Transverse colon (tissue), 4 donors: ENCODE measurements at regions of chr22 and their contacts with region 1.

Region 1: DNA sequence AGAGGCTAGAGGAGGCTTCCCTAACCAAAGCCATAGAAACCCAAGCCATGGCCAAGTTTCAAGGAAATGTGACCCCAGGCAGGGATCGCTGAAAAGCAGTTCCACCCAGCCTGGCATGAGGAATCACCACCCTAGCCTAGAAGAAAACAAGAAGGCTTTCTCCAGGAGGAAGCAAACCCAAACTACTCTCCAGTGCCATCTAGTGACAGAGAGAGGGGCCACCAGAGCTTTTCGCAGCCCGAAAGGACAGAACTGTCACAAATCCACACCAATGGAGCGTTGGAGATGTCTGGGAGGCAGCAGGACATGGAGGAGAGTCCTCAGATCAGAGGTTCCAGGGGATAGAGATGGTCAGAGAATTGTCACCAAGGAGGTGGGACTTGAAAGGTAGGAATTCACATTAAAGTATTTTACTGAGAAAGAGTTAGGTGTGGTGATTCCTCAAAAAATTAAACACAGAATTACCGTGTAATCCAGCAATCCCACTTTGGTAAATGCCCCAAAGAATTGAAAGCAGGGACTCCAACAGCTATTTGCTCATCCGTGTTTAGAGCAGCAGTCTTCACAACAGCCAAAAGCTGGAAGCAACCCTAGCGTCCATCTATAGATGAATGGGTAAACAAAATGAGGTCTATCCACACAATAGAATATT is 67.3 kb upstream of the NUP50 start:
- DNase-seq: peak; percentile 61
- H3K4me3 ChIP-seq: no peak overlapping the region
- H3K27ac ChIP-seq: no peak overlapping the region
- H3K4me1 ChIP-seq: peaks cover 0 to 2% (median 1%) of the 10 kb centered on the region in 4 donors
- H3K27me3 ChIP-seq: peaks cover 42% of the 10 kb centered on the region
- CTCF ChIP-seq: peak; percentile 56 to 73 (median 67)
- EP300 ChIP-seq: no peak
- POLR2A ChIP-seq: no peak

Region 2: GRCh38 chr22:43263645-43264514 is 1832.5 kb before region 1 on chr22:
- in situ Hi-C with region 1: no loop called
- intact Hi-C with region 1: loop called (anchors 5 kb)
- DNase-seq: peak; percentile 69
- H3K4me3 ChIP-seq: no peak overlapping the region
- H3K27ac ChIP-seq: peak overlapping the region; percentile 31 to 51 (median 42)
- H3K4me1 ChIP-seq: peaks cover 4 to 20% (median 10%) of the 10 kb centered on the region in 4 donors
- H3K27me3 ChIP-seq: peaks cover 31% of the 10 kb centered on the region
- CTCF ChIP-seq: no peak
- EP300 ChIP-seq: no peak
- POLR2A ChIP-seq: no peak

Region 3: GRCh38 chr22:44807915-44808690 is 288.3 kb before region 1 on chr22:
- in situ Hi-C with region 1: loop called in 1 of 4 experiments (anchors 25 kb)
- intact Hi-C with region 1: no loop called
- DNase-seq: no peak
- H3K4me3 ChIP-seq: no peak overlapping the region
- H3K27ac ChIP-seq: no peak overlapping the region
- H3K4me1 ChIP-seq: no peaks in the 10 kb centered on the region
- H3K27me3 ChIP-seq: no peaks in the 10 kb centered on the region
- CTCF ChIP-seq: no peak
- EP300 ChIP-seq: no peak
- POLR2A ChIP-seq: no peak

Region 4: GRCh38 chr22:45045208-45045607 is 51.2 kb before region 1 on chr22:
- in situ Hi-C with region 1: no loop called
- intact Hi-C with region 1: no loop called
- DNase-seq: no peak
- H3K4me3 ChIP-seq: no peak overlapping the region
- H3K27ac ChIP-seq: no peak overlapping the region
- H3K4me1 ChIP-seq: no peaks in the 10 kb centered on the region
- H3K27me3 ChIP-seq: peaks cover 14% of the 10 kb centered on the region
- CTCF ChIP-seq: no peak
- EP300 ChIP-seq: no peak
- POLR2A ChIP-seq: no peak

Region 5: DNA sequence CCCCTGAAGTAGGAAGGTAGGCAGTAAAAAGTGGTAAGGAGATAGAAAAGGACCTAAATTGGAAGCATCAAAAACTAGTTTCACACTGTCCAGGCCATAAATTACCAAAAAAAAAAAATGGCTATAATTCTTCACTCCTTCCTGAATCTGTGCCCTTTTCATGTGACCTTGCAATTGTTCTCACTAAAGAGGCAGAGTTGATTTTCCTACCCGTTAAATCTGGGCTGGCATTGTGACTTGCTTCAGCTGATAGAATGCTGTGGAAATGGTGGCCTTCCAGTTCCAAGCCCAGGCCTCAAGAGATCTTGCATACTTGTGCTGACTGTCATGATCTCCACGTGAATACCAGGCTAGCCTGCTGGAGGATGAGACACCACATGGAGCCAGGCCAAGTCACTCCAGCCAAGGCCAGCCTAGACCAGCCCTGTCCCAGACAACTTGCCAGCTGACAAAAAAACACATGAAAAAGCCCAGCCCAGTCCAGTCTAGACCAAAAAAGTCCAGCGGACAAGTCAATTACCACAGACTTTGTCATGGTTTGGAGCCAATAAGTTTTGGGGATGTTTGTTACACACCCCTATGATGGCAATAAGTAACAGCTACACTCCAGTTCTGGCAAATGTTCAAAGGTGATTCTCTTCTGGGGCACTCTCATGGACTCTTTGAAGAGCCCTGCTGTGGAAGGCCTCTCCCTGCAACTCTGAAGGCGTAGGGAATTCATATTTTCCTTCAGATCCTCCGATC is 15.9 kb after region 1 on chr22:
- in situ Hi-C with region 1: no loop called
- intact Hi-C with region 1: no loop called
- DNase-seq: no peak
- H3K4me3 ChIP-seq: no peak overlapping the region
- H3K27ac ChIP-seq: no peak overlapping the region
- H3K4me1 ChIP-seq: no peaks in the 10 kb centered on the region
- H3K27me3 ChIP-seq: peaks cover 5% of the 10 kb centered on the region
- CTCF ChIP-seq: no peak
- EP300 ChIP-seq: no peak
- POLR2A ChIP-seq: no peak

Region 6: GRCh38 chr22:45597460-45598192 is 501.2 kb after region 1 on chr22:
- in situ Hi-C with region 1: no loop called
- intact Hi-C with region 1: no loop called
- DNase-seq: no peak
- H3K4me3 ChIP-seq: no peak overlapping the region
- H3K27ac ChIP-seq: no peak overlapping the region
- H3K4me1 ChIP-seq: peaks cover 0 to 5% (median 1%) of the 10 kb centered on the region in 4 donors
- H3K27me3 ChIP-seq: no peaks in the 10 kb centered on the region
- CTCF ChIP-seq: no peak
- EP300 ChIP-seq: no peak
- POLR2A ChIP-seq: no peak